Activated T-helper 1 cell treated with anti-CD3 and anti-CD28 coated beads, Interleukin-12 subunit alpha, Interleukin-12 subunit beta, Interleukin-2, Interleukin-4 antibody, amounts not matched to agents 30 ng/mL and 10 ng/mL and 1 ng/mL, durations not matched to agents 14 hours and 24 hours and 36 hours (primary cell): ENCODE measurements at regions of chr20 and their contacts with region 1.

Region 1: DNA sequence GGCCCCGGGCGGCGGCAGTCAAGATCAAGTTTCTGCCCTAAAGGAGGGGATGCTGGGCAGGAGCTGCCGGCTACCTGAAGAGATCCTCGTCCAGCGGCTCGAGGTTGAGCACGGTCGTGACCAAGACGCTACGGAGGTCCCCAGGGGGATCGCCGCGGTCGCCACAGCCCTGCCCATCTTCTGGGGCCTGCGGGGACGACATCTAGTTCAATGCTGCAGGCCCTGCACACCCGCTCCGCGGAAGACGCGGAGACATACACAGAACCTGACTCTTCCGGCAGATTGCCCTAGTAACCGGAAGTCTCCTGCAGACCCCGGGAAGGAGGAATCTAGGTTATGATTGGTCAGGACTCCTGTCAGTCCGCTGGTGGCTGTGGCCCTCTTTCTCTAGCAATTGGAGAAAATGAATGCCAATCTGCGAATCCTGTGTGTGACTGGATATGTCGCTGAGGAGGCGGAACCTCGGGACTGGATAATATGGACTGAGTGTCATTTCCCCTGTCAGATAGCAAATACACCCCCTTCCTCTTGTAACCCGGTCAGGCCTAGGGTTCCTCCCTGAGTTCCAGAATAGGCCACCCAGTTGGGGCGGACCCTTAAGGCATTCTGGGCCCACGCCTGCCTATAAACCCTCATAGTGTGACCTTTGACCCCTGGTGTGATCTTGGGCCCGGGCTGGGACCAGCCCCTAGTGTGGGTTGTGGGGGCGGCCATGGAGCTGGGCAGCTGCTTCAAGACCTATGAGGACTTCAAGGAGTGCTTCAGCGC is at the starts of genes ACOT8 and ZSWIM3:
- DNase-seq: peak; percentile 95
- H3K4me3 Mint-ChIP-seq: peak within 1 kb of the TSS; percentile 97
- H3K27ac Mint-ChIP-seq: peak within 1 kb of the TSS; percentile 98
- H3K4me1 Mint-ChIP-seq: peaks cover 33% of the 10 kb centered on the region
- H3K27me3 Mint-ChIP-seq: no peaks in the 10 kb centered on the region
- total RNA-seq, gene ACOT8: 26.5 and 27.2 TPM in 2 replicates
- total RNA-seq, gene ZSWIM3: 5.8 and 6.2 TPM in 2 replicates

Region 2: GRCh38 chr20:45415774-45416637 is 441.3 kb before region 1 on chr20 and contains the start of gene PIGT:
- intact Hi-C with region 1: loop called (anchors 2 kb)
- DNase-seq: peak; percentile 86
- H3K4me3 Mint-ChIP-seq: peak within 1 kb of the TSS; percentile 94
- H3K27ac Mint-ChIP-seq: peak within 1 kb of the TSS; percentile 90
- H3K4me1 Mint-ChIP-seq: peaks cover 39% of the 10 kb centered on the region
- H3K27me3 Mint-ChIP-seq: no peaks in the 10 kb centered on the region
- total RNA-seq, gene PIGT: 89.8 and 90.6 TPM in 2 replicates

Region 3: GRCh38 chr20:45812157-45813020 is 44.9 kb before region 1 on chr20 and contains the start of gene UBE2C:
- intact Hi-C with region 1: loop called (anchors 1 kb)
- DNase-seq: peak; percentile 95
- H3K4me3 Mint-ChIP-seq: peak within 1 kb of the TSS; percentile 89
- H3K27ac Mint-ChIP-seq: peak within 1 kb of the TSS; percentile 82
- H3K4me1 Mint-ChIP-seq: peaks cover 35% of the 10 kb centered on the region
- H3K27me3 Mint-ChIP-seq: no peaks in the 10 kb centered on the region
- total RNA-seq, gene UBE2C: 114 and 118 TPM in 2 replicates

Region 4: DNA sequence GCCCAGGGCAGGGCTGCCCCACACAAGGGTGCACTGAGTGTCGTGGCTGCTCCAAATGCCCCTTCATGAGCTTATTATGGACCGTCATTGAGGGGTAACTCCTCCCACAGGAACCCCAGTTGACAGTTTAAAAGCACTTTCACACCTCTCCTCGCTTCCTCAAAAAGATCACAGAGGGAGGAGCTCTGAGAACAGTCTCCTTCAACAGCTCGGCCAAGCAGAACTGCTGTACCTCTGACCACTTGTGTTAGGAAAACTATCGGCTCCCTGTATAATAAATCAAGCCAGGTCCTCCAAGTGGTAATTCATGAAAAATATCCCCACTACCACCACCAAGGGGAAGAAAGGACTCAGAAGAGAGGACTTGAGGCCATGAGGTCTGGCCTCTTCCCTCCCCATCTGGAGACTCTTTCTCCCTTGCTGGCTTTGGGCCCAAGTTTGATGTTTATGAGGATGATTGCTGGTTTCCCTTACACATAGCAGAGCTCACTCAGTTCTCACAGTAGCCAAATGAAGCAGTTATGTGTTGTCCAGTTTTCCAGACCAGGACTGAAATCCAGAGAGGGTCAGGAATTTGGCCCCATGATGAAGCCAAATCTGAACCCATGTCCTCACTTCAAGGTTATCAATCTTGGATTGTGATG is 15.0 kb before region 1 on chr20:
- intact Hi-C with region 1: no loop called
- DNase-seq: no peak
- H3K4me3 Mint-ChIP-seq: no peak overlapping the region
- H3K27ac Mint-ChIP-seq: no peak overlapping the region
- H3K4me1 Mint-ChIP-seq: no peaks in the 10 kb centered on the region
- H3K27me3 Mint-ChIP-seq: no peaks in the 10 kb centered on the region

Region 5: DNA sequence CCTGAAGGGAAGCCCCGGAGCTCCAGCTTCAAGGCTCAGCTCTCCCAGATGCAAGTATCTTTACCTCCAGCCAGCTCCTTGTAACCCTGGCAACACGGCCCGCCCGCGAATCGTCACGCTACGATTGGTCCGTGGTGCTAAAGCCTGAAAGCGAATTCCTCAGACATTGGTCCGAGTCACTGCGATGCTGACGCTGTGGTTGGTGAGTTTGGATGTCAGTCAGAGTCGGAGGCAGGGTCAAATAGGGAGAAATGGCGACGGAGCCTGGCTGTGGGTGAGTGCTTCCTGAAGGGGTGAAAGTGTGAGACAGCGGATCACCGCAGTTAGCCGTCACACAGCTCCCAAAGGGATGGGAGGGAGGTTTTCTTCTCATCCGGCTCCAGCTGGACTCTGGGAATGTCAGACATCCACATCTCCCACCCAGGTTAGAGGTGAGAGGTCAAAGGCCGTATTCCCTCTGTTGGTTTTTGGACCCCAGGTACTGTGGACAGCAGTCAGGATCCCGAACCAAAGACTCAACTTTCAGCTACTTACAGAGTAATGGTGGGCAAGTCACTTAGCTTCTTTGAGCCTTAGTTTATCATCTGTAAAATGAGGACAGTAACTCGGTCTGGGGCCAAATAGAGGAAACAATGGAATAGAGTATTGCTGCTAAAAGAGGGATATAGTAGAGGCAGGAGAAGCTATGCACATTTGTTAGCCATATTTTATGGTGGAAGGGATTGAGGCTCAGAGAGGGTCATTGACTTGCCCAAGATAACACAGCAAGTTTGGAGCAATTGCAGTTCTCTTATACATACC is 23.9 kb after region 1 on chr20 and contains the start of gene ZSWIM1:
- intact Hi-C with region 1: loop called (anchors 1 kb)
- DNase-seq: peak; percentile 96
- H3K4me3 Mint-ChIP-seq: peak within 1 kb of the TSS; percentile 84
- H3K27ac Mint-ChIP-seq: peak within 1 kb of the TSS; percentile 72
- H3K4me1 Mint-ChIP-seq: peaks cover 45% of the 10 kb centered on the region
- H3K27me3 Mint-ChIP-seq: peaks cover 2% of the 10 kb centered on the region
- total RNA-seq, gene ZSWIM1: 7.5 and 7.8 TPM in 2 replicates

Region 6: DNA sequence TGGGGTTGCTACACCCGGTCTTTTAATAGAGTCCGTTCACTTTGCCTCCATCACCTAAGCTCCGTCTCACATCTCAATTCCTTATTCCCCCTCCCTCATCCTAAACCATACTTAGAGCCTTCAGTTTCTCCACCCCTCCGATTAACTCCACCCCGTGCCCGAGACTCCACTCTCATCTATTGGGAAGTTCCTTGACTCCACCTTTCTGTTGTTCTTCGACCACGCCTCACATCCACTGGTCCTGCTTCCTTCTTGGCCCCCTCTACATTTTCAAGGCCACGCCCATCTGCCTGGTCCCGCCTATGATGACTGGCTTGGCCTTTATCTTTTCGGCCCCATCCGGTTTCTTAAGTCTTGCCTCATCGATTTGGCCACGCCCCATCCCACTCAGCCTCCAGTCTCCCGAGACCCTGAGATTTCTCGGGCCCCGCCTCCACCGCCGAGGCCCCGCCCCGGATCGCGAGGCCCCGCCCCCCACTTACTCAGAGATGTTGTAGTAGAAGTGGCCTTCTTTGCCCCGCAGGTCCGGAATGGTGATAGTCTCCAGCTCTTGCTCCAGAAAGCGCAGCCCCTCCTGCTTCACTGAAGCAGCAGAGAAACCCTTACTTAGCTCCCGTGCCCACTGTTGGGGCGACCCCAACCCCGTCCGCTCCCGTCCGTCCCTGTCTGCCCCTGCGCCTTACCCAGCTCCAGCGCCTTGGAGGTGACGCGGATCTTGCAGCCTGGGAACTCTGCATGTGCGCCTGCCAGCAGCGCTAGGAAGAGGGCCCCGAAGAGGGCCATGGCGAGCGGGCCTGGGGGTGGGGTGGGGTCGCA is 53.6 kb after region 1 on chr20:
- intact Hi-C with region 1: loop called (anchors 1 kb)
- DNase-seq: peak; percentile 81
- H3K4me3 Mint-ChIP-seq: peak overlapping the region; percentile 45
- H3K27ac Mint-ChIP-seq: peak overlapping the region; percentile 33
- H3K4me1 Mint-ChIP-seq: peaks cover 14% of the 10 kb centered on the region
- H3K27me3 Mint-ChIP-seq: peaks cover 14% of the 10 kb centered on the region

Region 7: GRCh38 chr20:47272893-47273590 is 1415.7 kb after region 1 on chr20:
- intact Hi-C with region 1: no loop called
- DNase-seq: peak; percentile 56
- H3K4me3 Mint-ChIP-seq: peak overlapping the region; percentile 70
- H3K27ac Mint-ChIP-seq: peak overlapping the region; percentile 94
- H3K4me1 Mint-ChIP-seq: peaks cover 50% of the 10 kb centered on the region
- H3K27me3 Mint-ChIP-seq: no peaks in the 10 kb centered on the region